ENCODE measurements at regions of chr10 and their contacts with region 1.

Region 1: GRCh38 chr10:96586419-96587263 is at the start of gene TM9SF3:
- DNase-seq: peak; percentile 94
- H3K4me3 Mint-ChIP-seq: peak within 1 kb of the TSS; percentile 84
- H3K27ac Mint-ChIP-seq: peak within 1 kb of the TSS; percentile 88
- H3K4me1 Mint-ChIP-seq: peaks cover 32% of the 10 kb centered on the region
- H3K27me3 Mint-ChIP-seq: peaks cover 2% of the 10 kb centered on the region
- total RNA-seq, gene TM9SF3: 39.6 to 41.0 TPM

Region 2: DNA sequence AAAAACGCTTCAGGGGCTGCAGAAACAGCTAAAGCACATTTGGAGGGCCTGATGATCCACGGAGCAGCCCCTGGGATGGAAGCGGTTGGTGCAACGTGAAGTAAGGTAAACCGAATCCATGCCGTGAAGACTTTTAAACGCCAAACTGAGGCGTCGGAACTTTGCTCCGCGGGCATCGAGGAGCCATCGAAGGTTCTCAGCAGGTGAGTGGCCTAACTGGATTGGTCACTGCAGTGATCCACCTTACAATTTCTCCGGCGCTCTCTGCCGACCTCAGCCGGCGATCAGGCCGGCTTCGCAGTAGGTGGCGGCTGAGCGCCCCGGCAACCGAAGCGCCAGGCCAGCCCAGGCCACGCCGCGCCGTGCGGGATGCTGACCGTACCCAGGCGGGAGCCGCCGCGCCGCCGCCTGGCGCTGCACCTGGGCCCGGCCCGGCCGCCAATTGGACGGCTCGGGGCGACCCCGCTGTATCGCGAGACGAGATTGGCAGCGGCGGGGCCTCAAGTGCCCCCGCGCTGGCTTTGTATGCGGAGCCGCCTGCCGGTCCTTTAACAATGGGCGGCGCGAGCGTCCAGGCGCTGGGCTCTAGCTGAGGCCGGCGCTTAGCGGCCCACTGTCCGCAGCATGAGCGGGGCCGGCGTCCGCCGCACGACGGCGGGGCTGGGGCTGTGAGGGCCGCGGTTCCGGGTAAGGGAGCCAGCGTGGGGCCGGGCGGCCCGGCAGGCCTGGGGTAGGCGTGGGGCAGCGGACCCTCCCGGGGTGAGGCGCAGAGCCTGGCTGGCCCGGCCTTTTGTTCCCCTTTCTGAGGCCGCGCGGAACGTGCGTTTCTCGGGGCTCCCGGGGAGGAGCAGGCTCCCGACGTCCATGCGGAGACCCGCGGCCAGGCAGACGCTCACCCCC is 543.4 kb before region 1 on chr10 and contains the start of gene CCNJ:
- CTCF ChIA-PET with region 1: no interaction called
- intact Hi-C with region 1: loop called (anchors 10 kb)
- DNase-seq: peak; percentile 85
- H3K4me3 Mint-ChIP-seq: peak within 1 kb of the TSS; percentile 88
- H3K27ac Mint-ChIP-seq: peak within 1 kb of the TSS; percentile 71
- H3K4me1 Mint-ChIP-seq: peaks cover 35% of the 10 kb centered on the region
- H3K27me3 Mint-ChIP-seq: peaks cover 4% of the 10 kb centered on the region
- total RNA-seq, gene CCNJ: 3.2 to 3.6 TPM

Region 3: GRCh38 chr10:96513698-96514561 is 72.7 kb before region 1 on chr10 and contains the start of gene TLL2:
- CTCF ChIA-PET with region 1: interaction called, 3 read pairs
- intact Hi-C with region 1: loop called (anchors 1 kb)
- DNase-seq: peak; percentile 69
- H3K4me3 Mint-ChIP-seq: peak within 1 kb of the TSS; percentile 61
- H3K27ac Mint-ChIP-seq: no peak within 1 kb of the TSS
- H3K4me1 Mint-ChIP-seq: peaks cover 14% of the 10 kb centered on the region
- H3K27me3 Mint-ChIP-seq: peaks cover 44% of the 10 kb centered on the region
- total RNA-seq, gene TLL2: 0.07 TPM in 1 of 2 experiments, not detected in the other

Region 4: DNA sequence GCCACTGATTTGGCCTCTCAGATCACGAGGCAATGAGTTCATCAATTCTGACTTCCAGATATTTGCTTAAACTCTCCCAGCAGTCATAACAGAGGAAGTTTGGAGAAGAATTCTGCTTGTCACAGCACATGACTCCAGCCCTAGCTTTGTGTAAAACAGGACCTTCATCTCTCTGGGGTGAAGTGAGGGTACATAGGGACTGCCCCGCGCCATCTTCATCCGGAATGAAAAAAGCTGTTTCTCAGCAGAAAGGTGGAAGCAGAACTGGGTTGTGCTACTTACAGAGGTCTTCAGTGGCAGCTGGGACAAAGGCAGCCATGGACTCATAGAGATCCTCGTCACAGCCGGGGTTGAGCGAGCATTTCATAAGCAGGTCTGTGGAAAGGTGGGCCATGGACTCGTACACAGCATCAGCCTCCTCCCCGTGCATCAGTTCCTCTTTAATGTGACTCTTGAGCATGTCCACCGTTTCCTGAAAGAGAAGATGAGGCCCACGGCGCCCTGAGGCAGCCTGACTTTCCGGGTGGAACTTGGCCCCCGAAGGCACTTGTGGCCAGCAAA is 58.6 kb after region 1 on chr10:
- CTCF ChIA-PET with region 1: no interaction called
- intact Hi-C with region 1: no loop called
- DNase-seq: no peak
- H3K4me3 Mint-ChIP-seq: no peak overlapping the region
- H3K27ac Mint-ChIP-seq: no peak overlapping the region
- H3K4me1 Mint-ChIP-seq: peaks cover 22% of the 10 kb centered on the region
- H3K27me3 Mint-ChIP-seq: no peaks in the 10 kb centered on the region

Region 5: GRCh38 chr10:96803318-96803664 is 216.7 kb after region 1 on chr10:
- CTCF ChIA-PET with region 1: no interaction called
- intact Hi-C with region 1: no loop called
- DNase-seq: no peak
- H3K4me3 Mint-ChIP-seq: no peak overlapping the region
- H3K27ac Mint-ChIP-seq: no peak overlapping the region
- H3K4me1 Mint-ChIP-seq: no peaks in the 10 kb centered on the region
- H3K27me3 Mint-ChIP-seq: peaks cover 7% of the 10 kb centered on the region

Region 6: GRCh38 chr10:96831867-96832720 is 245.5 kb after region 1 on chr10 and contains the start of gene LCOR:
- CTCF ChIA-PET with region 1: no interaction called
- intact Hi-C with region 1: loop called (anchors 1 kb)
- DNase-seq: peak; percentile 83
- H3K4me3 Mint-ChIP-seq: peak within 1 kb of the TSS; percentile 88
- H3K27ac Mint-ChIP-seq: peak within 1 kb of the TSS; percentile 94
- H3K4me1 Mint-ChIP-seq: peaks cover 43% of the 10 kb centered on the region
- H3K27me3 Mint-ChIP-seq: no peaks in the 10 kb centered on the region
- total RNA-seq, gene LCOR: 18.1 to 22.9 TPM

Region 7: DNA sequence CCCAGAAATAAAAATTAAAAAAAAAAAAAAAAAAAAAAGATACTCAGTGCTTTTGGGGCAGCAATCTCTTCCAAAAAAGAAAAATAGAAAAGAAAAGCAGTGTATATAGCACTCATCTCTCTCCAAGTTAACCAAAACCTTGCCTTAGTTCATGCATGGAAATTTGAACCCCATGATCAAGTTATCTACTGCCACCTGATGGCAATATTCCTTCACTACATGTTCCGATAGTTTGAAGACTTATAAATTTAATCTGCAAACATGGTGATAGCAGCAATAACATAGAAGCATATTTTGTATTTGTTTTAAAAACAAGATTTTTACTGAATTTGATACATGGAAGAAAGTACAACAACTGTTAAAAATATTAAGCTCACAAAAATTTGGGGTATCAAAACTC is 647.8 kb after region 1 on chr10:
- CTCF ChIA-PET with region 1: no interaction called
- intact Hi-C with region 1: loop called (anchors 5 kb)
- DNase-seq: no peak
- H3K4me3 Mint-ChIP-seq: no peak overlapping the region
- H3K27ac Mint-ChIP-seq: no peak overlapping the region
- H3K4me1 Mint-ChIP-seq: peaks cover 19% of the 10 kb centered on the region
- H3K27me3 Mint-ChIP-seq: no peaks in the 10 kb centered on the region

Region 8: DNA sequence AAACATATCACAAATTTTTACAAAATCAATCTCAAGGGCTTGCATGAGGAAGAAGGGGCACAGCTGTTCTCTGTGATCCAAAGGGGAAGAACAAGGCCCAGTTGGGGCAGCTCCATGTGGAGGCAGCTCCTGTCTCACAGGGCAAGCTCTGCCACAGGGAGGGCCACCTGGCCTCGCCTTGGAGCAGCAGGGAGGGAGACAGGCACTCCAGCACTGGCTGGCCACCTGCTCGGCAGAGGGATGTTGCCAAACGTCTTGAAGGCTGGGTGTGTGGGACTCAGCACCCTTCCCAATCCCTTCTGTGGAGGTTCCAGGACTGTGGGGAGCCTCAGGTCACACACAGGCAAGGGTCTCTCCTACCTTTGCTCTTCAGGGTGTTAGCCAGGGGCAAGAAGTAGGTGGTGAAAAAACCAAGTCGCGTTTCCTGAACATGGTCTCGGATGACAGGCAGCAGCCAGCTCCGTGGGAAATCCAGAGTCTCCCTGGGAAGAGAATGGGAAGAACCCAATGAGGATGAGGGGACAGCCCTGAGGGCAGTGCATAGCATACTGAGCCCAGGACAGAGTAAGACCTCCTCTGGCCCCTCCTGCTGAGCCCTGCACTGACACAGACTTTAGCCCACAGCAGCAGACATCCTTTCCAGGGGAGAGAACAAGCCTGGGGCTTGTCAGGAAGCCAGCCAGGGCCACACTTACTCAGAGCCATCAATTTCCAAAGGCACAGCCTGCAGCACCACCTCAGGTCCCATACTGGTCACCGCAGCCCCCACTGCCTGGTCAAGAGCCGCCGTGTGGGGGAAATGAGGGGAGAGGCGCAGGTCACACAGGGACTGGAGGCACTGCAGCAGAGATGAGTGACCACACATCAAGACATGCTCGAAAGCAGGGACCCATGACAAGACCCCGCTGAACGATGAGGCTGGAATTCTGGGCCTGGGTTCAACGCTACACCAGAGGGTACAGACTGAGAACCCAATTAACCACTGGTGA is 792.6 kb after region 1 on chr10:
- CTCF ChIA-PET with region 1: no interaction called
- intact Hi-C with region 1: no loop called
- DNase-seq: no peak
- H3K4me3 Mint-ChIP-seq: no peak overlapping the region
- H3K27ac Mint-ChIP-seq: no peak overlapping the region
- H3K4me1 Mint-ChIP-seq: no peaks in the 10 kb centered on the region
- H3K27me3 Mint-ChIP-seq: no peaks in the 10 kb centered on the region

Region 9: DNA sequence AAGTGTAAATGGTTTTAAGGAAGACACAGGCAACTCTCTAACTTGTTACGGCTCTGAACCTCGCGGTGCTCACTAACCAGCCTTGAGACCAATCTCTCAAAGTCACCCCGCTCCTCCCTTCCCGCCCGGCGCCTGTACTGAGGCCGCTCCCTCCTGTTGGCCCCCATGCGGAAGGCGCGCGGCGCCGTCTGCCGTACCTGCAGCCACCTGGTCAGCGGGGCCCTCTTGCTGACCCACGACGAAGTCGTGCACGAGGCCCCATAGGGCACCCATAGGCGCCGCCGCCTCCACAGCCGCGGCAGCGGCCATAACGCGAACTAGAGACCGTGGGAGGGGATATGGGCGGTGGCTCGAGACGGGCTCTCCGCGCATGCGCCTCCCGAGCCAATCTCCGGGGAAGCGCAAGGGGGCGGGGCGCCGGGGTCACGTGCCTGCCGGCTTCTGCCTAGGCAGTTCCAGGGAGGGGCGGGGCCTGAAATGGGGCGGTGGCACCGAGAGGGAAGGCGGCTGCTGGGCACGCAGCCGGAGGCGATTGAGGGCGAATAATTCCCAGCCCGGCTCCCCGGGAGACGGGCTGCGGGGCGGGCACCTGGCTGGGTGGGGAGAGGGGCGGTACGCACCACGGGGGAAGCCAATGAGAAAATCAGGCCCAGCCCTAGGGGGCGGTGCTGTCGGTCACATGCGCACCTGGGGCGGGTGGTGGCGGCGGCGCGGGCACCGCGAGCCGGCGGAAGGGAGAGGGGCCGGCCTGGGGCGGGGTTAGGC is 911.6 kb after region 1 on chr10 and contains the start of gene MMS19:
- CTCF ChIA-PET with region 1: no interaction called
- intact Hi-C with region 1: loop called (anchors 5 kb)
- DNase-seq: peak; percentile 99
- H3K4me3 Mint-ChIP-seq: peak within 1 kb of the TSS; percentile 87
- H3K27ac Mint-ChIP-seq: peak within 1 kb of the TSS; percentile 94
- H3K4me1 Mint-ChIP-seq: peaks cover 41% of the 10 kb centered on the region
- H3K27me3 Mint-ChIP-seq: peaks cover 21% of the 10 kb centered on the region
- total RNA-seq, gene MMS19: 95.0 to 95.6 TPM